ENCODE measurements at regions of chr2 and their contacts with region 1.

Region 1: GRCh38 chr2:37414470-37414949 is 70.1 kb downstream of the QPCT start:
- DNase-seq: no peak
- H3K4me3 ChIP-seq: no peak overlapping the region
- H3K27ac ChIP-seq: peak overlapping the region in 1 of 2 donors; percentile 31
- H3K4me1 ChIP-seq: peaks cover 0 to 3% of the 10 kb centered on the region in 2 donors
- H3K27me3 ChIP-seq: no peaks in the 10 kb centered on the region
- CTCF ChIP-seq: peak; percentile 75 to 95 (median 84)

Region 2: GRCh38 chr2:37397166-37397565 is 17.3 kb before region 1 on chr2:
- intact Hi-C with region 1: loop called (anchors 2 kb)
- DNase-seq: no peak
- H3K4me3 ChIP-seq: no peak overlapping the region
- H3K27ac ChIP-seq: no peak overlapping the region
- H3K4me1 ChIP-seq: no peaks in the 10 kb centered on the region
- H3K27me3 ChIP-seq: no peaks in the 10 kb centered on the region
- CTCF ChIP-seq: no peak

Region 3: DNA sequence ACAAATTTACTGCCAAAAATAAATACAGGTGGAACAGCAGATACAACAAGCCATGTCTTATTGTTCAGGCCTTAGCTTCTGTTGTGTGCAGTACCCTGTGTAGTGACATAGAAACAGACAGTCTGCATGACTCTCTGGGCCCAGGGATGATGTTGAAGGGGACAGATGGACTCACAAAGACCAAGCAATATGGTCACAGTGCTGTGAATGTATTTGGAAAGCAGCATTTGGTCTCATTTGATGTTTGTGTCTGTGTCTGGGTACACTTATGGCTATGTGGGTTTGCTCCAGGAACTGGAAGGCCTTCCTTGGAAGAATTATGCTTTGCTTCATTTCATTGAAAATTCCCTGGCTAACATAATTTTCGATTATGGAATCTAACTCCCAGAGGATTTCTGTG is 98.5 kb after region 1 on chr2:
- intact Hi-C with region 1: no loop called
- DNase-seq: no peak
- H3K4me3 ChIP-seq: no peak overlapping the region
- H3K27ac ChIP-seq: no peak overlapping the region
- H3K4me1 ChIP-seq: no peaks in the 10 kb centered on the region
- H3K27me3 ChIP-seq: no peaks in the 10 kb centered on the region
- CTCF ChIP-seq: no peak

Region 4: GRCh38 chr2:37809525-37809924 is 395.0 kb after region 1 on chr2:
- intact Hi-C with region 1: loop called (anchors 1 kb)
- DNase-seq: no peak
- H3K4me3 ChIP-seq: no peak overlapping the region
- H3K27ac ChIP-seq: peak overlapping the region; percentile 52 to 76
- H3K4me1 ChIP-seq: peaks cover 4 to 14% of the 10 kb centered on the region in 2 donors
- H3K27me3 ChIP-seq: no peaks in the 10 kb centered on the region
- CTCF ChIP-seq: peak; percentile 38 to 56 (median 40)

Region 5: GRCh38 chr2:37832590-37833197 is 418.2 kb after region 1 on chr2:
- intact Hi-C with region 1: loop called (anchors 1 kb)
- DNase-seq: peak; percentile 38 to 96
- H3K4me3 ChIP-seq: no peak overlapping the region
- H3K27ac ChIP-seq: no peak overlapping the region
- H3K4me1 ChIP-seq: peaks cover 0 to 16% of the 10 kb centered on the region in 2 donors
- H3K27me3 ChIP-seq: no peaks in the 10 kb centered on the region
- CTCF ChIP-seq: peak; percentile 63 to 91 (median 82)

Region 6: GRCh38 chr2:37877457-37878315 is 463.2 kb after region 1 on chr2:
- intact Hi-C with region 1: loop called (anchors 1 kb)
- DNase-seq: no peak
- H3K4me3 ChIP-seq: no peak overlapping the region
- H3K27ac ChIP-seq: no peak overlapping the region
- H3K4me1 ChIP-seq: no peaks in the 10 kb centered on the region
- H3K27me3 ChIP-seq: no peaks in the 10 kb centered on the region
- CTCF ChIP-seq: peak; percentile 62 to 78 (median 73)